OCI-LY7 (cell line): ENCODE measurements at regions of chrX and their contacts with region 1.

Region 1: DNA sequence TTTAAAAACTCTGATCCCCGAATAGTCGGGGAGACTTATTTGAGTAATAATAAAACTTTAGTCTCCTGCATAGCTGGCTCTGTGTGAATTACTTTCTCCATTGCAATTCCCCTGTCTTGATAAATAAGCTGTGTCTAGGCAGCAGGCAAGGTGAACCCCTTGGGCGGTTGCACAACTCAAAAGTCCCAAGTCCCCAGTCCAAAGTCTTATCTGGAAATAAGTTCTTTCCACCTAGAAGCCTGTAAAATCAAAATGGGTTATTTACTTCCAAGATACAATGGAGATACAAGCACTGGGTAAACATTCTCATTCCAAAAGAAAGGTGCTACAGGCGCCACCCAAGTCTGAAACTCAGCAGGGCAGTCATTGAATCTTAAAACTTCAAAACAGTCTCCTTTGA is 10.1 kb upstream of the PNMA5 start:
- DNase-seq: no peak
- H3K4me3 ChIP-seq: no peak overlapping the region
- H3K27ac ChIP-seq: no peak overlapping the region
- H3K4me1 ChIP-seq: no peaks in the 10 kb centered on the region
- CTCF ChIP-seq: no peak

Region 2: GRCh38 chrX:152969548-152969947 is 34.4 kb before region 1 on chrX:
- CTCF ChIA-PET with region 1: no interaction called
- POLR2A ChIA-PET with region 1: no interaction called
- intact Hi-C with region 1: no loop called
- DNase-seq: no peak
- H3K4me3 ChIP-seq: no peak overlapping the region
- H3K27ac ChIP-seq: no peak overlapping the region
- H3K4me1 ChIP-seq: no peaks in the 10 kb centered on the region
- CTCF ChIP-seq: no peak

Region 3: GRCh38 chrX:153657161-153657560 is 653.2 kb after region 1 on chrX:
- CTCF ChIA-PET with region 1: interaction called, 12 read pairs
- POLR2A ChIA-PET with region 1: no interaction called
- intact Hi-C with region 1: no loop called
- DNase-seq: no peak
- H3K4me3 ChIP-seq: no peak overlapping the region
- H3K27ac ChIP-seq: no peak overlapping the region
- H3K4me1 ChIP-seq: no peaks in the 10 kb centered on the region
- CTCF ChIP-seq: no peak